Common myeloid progenitor, CD34-positive (primary cell): ENCODE measurements at regions of chr5 and their contacts with region 1.

Region 1: DNA sequence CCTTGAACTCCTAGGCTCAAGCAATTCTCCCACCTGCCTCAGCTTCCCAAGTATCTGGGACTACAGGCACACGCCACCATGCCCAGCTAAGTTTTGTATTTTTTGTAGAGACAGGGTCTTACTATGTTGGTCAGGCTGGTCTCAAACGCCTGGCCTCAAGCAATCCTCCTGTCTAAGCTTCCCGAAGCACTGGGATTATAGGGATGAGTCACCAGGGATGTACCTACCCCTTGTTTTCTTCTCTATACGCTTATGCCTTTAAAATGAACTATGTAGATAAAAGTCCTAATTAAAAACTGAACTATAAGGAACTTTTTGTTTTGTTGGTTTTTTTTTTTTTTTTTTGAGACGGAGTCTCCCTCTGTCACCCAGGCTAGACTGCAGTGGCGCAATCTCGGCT is 25.8 kb downstream of the UIMC1 start:
- DNase-seq: no peak
- H3K4me3 ChIP-seq: no peak overlapping the region
- H3K27ac ChIP-seq: no peak overlapping the region
- H3K4me1 ChIP-seq: peaks cover 0 to 5% (median 2%) of the 10 kb centered on the region in 4 experiments
- H3K27me3 ChIP-seq: no peaks in the 10 kb centered on the region

Region 2: DNA sequence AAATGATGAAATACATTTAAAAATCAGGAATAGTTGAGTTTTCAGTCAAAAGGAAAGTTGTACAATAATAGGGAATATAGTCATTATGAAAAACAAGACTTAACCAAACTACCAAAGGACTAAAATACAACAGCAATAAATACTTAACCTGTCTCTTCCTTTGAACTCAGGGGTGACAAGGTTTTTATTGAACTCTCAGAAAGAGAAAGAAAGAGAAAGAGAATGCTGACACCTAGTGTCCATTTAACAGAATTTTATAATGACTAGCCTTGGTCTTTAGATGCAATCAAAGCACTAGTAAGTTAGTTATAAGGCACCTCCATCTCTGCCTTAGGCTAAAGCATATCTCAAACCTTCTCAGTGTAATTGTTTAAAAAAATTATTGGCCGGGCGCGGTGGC is 21.8 kb before region 1 on chr5:
- CTCF ChIA-PET with region 1: no interaction called
- POLR2A ChIA-PET with region 1: no interaction called
- DNase-seq: peak; percentile 48 to 70 (median 66)
- H3K4me3 ChIP-seq: no peak overlapping the region
- H3K27ac ChIP-seq: no peak overlapping the region
- H3K4me1 ChIP-seq: no peaks in the 10 kb centered on the region
- H3K27me3 ChIP-seq: no peaks in the 10 kb centered on the region

Region 3: DNA sequence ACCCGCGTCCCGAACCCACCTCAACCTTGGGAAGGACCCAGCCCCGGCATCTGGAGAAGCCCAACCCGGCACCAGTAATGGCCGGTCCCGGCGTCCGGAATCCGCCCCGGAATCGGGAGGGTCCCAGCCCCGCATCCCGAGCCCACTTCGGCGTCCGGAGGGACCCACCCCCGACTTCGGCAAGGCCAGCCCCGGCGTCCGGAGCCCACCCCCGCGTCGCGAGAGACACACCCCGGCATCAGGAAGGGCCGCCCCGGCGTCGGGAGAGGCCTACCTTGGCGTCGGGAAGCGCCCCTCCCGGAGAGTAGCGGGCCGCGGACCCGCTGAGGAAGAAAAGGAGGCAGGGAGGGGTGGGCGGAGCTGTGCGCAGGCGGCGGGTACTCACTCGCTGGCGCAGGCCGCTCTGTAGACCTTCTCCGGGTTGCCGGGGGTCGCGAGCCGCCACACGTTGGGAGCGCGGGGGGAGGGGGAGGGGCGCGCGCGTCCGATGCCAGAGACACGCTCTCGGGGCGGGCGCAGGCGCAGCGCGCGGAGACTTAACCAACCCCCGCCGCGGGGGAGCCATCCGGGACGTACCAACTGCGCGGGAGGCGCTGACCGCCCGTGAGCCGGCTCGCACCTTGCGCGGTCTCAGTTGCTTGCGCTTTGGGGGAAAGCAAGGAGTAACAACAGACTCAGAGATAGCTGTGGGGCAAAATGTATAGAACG is 25.6 kb after region 1 on chr5 and contains the start of gene UIMC1:
- CTCF ChIA-PET with region 1: interaction called, 13 read pairs
- POLR2A ChIA-PET with region 1: no interaction called
- DNase-seq: peak; percentile 92 to 97 (median 96)
- H3K4me3 ChIP-seq: peak within 1 kb of the TSS; percentile 58 to 95 (median 88)
- H3K27ac ChIP-seq: peak within 1 kb of the TSS; percentile 78 to 91
- H3K4me1 ChIP-seq: peaks cover 4 to 16% (median 11%) of the 10 kb centered on the region in 4 experiments
- H3K27me3 ChIP-seq: no peaks in the 10 kb centered on the region

Region 4: GRCh38 chr5:177049285-177049684 is 68.5 kb after region 1 on chr5:
- CTCF ChIA-PET with region 1: no interaction called
- POLR2A ChIA-PET with region 1: no interaction called
- DNase-seq: peak in 2 of 3 donors; percentile 6 to 12
- H3K4me3 ChIP-seq: no peak overlapping the region
- H3K27ac ChIP-seq: no peak overlapping the region
- H3K4me1 ChIP-seq: no peaks in the 10 kb centered on the region
- H3K27me3 ChIP-seq: no peaks in the 10 kb centered on the region